ENCODE measurements at regions of chr19 and their contacts with region 1.

Region 1: DNA sequence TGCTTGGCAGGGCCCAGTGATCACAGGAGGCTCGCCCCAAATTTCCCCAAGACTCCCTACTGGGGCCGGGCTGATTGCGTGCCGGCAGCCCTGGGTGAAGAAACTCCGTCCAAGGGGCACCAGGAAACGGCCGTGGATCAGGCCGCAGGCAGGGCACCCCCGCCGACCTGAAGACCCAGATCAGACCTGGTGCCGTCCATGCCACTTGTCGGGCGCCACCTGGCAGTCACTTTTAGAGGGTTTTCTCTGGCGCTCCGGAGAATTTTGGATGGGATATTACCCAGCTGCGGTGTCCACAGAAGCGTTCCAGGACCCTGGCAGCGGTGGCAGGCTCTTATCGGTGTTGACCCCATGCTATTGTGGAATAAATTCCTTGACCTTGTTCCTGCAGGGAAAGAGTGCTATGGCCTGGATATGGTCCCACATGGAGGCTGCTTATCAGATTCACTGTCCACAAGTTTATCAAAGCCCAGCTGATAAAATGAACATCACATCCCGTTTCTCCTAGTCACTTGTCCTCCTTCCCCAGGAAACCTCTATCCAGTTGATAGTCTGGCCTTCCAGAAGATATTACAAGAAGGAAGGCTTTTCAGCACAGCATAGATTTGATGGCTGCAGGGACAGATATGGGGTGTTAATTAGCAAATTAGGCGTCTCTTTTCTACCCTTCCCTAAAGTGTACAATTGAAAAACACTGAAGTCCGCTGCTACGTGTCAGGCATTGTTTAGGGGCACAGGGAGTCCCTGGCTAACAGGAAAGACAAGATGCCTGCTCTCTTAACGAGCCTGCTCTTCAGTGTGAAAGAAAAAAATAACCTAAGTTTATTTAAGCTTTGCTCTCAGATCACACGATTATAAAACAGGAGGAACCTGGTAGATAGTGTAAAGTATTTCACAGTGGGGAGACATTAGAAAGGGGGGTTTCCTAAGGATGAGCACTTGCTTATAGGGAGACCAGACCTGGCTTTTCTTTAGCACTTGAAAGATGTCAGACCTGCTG is 38.4 kb downstream of the IGFL2 start:
- DNase-seq: no peak

Region 2: DNA sequence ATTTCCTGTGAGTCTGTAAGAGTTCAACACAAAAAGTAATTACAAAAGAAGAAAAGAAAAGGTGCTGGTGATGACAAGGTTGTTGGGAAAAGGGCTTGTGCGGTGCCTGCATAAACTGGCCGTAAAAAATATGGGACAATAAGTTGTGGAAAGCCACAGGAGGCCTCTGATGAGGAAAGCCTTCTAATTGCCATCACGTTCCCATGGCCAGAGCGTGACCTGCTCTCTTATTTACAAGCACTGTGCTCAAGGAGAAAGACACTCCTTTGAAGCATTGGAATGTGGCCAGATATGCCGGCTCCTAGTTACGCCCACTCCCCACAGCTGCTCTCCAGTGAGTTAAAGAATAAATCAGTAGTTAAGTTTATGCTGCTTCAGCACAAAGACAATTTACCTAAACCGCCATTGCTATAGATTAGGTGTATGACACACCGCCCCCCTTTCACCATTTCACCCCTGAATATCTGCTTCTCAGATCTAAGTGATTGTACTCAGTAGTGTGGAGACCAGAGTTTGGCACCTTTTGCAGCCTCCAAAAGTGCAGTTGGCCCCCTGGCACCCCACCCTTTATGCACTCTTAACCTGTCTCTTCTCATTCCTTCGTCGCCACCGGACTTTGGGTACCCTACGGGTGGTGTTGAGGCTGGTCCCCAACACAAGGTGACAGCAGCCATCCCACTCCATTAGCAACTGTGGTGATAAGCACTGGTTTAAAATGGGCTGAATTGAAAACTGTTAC is 155.4 kb before region 1 on chr19:
- intact Hi-C with region 1: loop called (anchors 5 kb)
- DNase-seq: no peak

Region 3: GRCh38 chr19:46081928-46082727 is 104.3 kb before region 1 on chr19:
- intact Hi-C with region 1: loop called (anchors 5 kb)
- DNase-seq: no peak

Region 4: DNA sequence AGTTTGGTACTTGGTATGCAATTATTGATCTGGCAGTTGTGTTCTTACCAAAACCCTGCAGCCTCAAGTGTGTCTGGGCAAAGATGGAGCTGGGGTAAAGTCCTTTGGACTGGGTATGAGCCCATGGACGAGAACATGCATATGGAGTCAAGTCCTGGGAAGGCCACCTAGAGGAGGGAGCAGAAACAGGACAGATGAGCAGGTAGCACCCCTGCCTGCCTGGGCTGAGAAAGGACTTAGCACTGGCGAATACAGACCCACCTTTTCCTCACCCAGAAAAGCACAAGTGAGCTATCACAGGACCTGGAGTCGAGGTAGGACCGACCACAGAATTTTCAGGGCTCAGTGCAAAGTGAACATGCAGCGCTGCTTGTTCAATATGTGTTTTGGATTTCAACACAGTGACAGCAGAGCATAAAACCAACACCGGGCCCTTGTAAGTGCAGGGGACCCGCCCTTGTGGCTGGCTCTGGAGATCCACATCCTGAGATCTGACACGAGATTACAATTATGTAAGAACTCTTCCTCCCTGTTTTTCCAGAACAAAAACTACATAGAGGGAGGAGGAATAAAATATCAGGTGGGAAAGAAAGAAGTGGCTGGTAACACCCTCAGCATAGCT is 12.4 kb before region 1 on chr19:
- intact Hi-C with region 1: no loop called
- DNase-seq: no peak

Measured in cardiac septum (tissue), 1 donor.